ENCODE measurements at regions of chr17 and their contacts with region 1.

Region 1: DNA sequence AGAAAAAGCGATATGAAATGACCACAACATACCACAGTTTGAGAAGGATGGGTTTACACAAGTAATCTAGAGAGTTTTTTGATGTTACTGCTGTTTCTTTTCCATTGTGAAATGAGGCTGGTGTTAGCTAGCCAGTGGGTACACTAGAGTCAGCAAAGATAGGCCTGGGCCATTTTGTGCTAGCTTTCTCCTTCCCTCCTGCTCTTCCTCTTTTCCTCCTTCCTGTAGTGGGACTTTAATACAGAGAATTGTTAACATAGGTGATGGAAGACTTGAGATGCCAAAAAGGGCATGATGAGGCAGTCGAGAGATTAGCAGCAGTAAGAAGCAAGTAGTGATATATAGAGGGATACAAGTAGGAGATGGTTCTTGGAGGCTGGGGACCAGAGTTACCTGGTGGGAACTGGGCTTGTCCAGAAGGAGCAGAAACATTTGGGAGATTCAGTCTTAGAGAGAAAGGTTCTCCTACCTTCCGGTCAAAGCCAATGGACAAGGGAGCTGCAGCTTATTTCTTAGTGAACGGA is 7.7 kb downstream of the NSRP1 start:
- DNase-seq: no peak
- ATAC-seq: no peak
- H3K4me3 Mint-ChIP-seq: no peak overlapping the region
- H3K27ac Mint-ChIP-seq: no peak overlapping the region
- H3K4me1 Mint-ChIP-seq: peaks cover 34% of the 10 kb centered on the region
- H3K27me3 Mint-ChIP-seq: no peaks in the 10 kb centered on the region

Region 2: DNA sequence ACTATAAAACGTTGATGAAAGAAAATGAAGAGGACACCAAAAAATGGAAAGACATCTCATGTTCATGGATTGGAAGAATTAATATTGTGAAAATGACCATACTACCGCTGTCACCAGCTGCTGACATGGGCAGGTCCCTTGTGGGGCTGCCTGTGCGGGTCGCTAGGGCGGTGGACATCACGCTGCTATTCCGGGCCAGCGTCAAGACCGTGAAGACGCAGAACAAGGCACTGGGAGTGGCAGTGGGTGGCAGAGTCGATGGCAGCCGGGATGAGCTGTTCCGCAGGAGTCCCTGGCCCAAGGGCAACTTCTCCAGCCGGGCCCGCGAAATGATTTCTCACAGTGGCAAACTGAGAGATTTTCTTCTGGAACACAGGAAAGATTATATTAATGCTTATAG is 55.9 kb before region 1 on chr17:
- CTCF ChIA-PET with region 1: no interaction called
- DNase-seq: no peak
- ATAC-seq: no peak
- H3K4me3 Mint-ChIP-seq: no peak overlapping the region
- H3K27ac Mint-ChIP-seq: no peak overlapping the region
- H3K4me1 Mint-ChIP-seq: no peaks in the 10 kb centered on the region
- H3K27me3 Mint-ChIP-seq: peaks cover 45% of the 10 kb centered on the region

Region 3: GRCh38 chr17:30134551-30134950 is 10.2 kb after region 1 on chr17:
- CTCF ChIA-PET with region 1: interaction called, 21 read pairs
- DNase-seq: no peak
- ATAC-seq: no peak
- H3K4me3 Mint-ChIP-seq: no peak overlapping the region
- H3K27ac Mint-ChIP-seq: no peak overlapping the region
- H3K4me1 Mint-ChIP-seq: peaks cover 7% of the 10 kb centered on the region
- H3K27me3 Mint-ChIP-seq: no peaks in the 10 kb centered on the region

Region 4: GRCh38 chr17:30236766-30237165 is 112.4 kb after region 1 on chr17:
- CTCF ChIA-PET with region 1: interaction called, 20 read pairs
- DNase-seq: no peak
- ATAC-seq: peak; percentile 47
- H3K4me3 Mint-ChIP-seq: peak overlapping the region; percentile 44
- H3K27ac Mint-ChIP-seq: no peak overlapping the region
- H3K4me1 Mint-ChIP-seq: peaks cover 27% of the 10 kb centered on the region
- H3K27me3 Mint-ChIP-seq: peaks cover 65% of the 10 kb centered on the region

Measured in activated CD8-positive, alpha-beta memory T cell treated with anti-CD3 and anti-CD28 coated beads, Interleukin-2, amount 10 ng/mL, durations not matched to agents 7 days and 5 days (primary cell).